ENCODE measurements at regions of chr2 and their contacts with region 1.

Region 1: DNA sequence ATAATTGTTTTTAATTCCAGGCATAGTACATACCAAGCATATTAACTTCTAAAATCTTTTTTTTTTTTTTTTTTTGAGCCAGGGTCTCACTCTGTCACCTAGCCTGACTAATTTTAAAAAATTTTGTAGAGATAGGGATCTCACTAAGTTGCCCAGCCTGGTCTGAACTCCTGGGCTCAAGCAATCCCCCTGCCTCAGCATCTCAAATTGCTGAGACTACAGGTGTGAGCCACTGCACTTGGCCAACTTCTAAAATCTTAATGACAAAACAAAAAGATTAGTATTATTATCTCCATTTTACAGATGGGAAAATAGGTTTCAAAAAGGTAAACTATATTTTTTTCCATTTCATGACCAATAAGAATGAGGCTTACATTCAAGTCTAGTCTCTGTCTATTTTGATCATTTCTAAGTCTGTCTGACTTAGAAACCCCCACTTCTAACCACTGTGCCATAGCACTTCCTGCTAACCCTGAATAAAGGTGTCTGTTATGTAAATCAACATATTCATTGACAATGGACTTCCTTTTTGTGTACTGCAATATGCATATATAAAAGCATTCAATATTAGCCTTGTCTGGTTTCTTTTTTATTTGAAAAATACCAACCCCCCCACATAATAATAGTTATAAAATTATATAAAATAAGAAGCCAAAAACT is 28.7 kb upstream of the ZEB2 start:
- DNase-seq: no peak
- H3K4me3 ChIP-seq: no peak overlapping the region
- H3K27ac ChIP-seq: no peak overlapping the region
- H3K4me1 ChIP-seq: no peaks in the 10 kb centered on the region
- H3K27me3 ChIP-seq: no peaks in the 10 kb centered on the region
- CTCF ChIP-seq: no peak
- POLR2A ChIP-seq: no peak

Region 2: GRCh38 chr2:143524119-143524553 is 1024.5 kb before region 1 on chr2:
- intact Hi-C with region 1: loop called (anchors 10 kb)
- DNase-seq: no peak
- H3K4me3 ChIP-seq: no peak overlapping the region
- H3K27ac ChIP-seq: peak overlapping the region in 1 of 2 donors; percentile 23
- H3K4me1 ChIP-seq: no peaks in the 10 kb centered on the region
- H3K27me3 ChIP-seq: no peaks in the 10 kb centered on the region
- CTCF ChIP-seq: no peak
- POLR2A ChIP-seq: no peak

Region 3: GRCh38 chr2:144583741-144584453 is 35.2 kb after region 1 on chr2:
- intact Hi-C with region 1: no loop called
- DNase-seq: no peak
- H3K4me3 ChIP-seq: no peak overlapping the region
- H3K27ac ChIP-seq: no peak overlapping the region
- H3K4me1 ChIP-seq: no peaks in the 10 kb centered on the region
- H3K27me3 ChIP-seq: no peaks in the 10 kb centered on the region
- CTCF ChIP-seq: no peak
- POLR2A ChIP-seq: no peak

Measured in breast epithelium (tissue), 4 donors.